Sigmoid colon (tissue), 7 donors: ENCODE measurements at regions of chr5 and their contacts with region 1.

Region 1: GRCh38 chr5:112707187-112708102 is 30.2 kb upstream of the APC start:
- DNase-seq: peak; percentile 99
- H3K4me3 ChIP-seq: peak overlapping the region; percentile 73 to 97 (median 90)
- H3K27ac ChIP-seq: peak overlapping the region; percentile 90 to 97 (median 96)
- H3K4me1 ChIP-seq: peaks cover 0 to 68% (median 49%) of the 10 kb centered on the region in 4 donors
- H3K27me3 ChIP-seq: no peaks in the 10 kb centered on the region
- CTCF ChIP-seq: peak in 1 of 4 experiments; percentile 17
- EP300 ChIP-seq: no peak
- POLR2A ChIP-seq: peak; percentile 56 to 67

Region 2: GRCh38 chr5:112737463-112738190 is 30.2 kb after region 1 on chr5 and contains the start of gene APC:
- intact Hi-C with region 1: loop called (anchors 1 kb)
- DNase-seq: peak; percentile 97
- H3K4me3 ChIP-seq: peak within 1 kb of the TSS; percentile 54 to 67 (median 58)
- H3K27ac ChIP-seq: peak within 1 kb of the TSS; percentile 73 to 85 (median 78)
- H3K4me1 ChIP-seq: peaks cover 0 to 38% (median 13%) of the 10 kb centered on the region in 4 donors
- H3K27me3 ChIP-seq: no peaks in the 10 kb centered on the region
- CTCF ChIP-seq: peak in 2 of 4 experiments; percentile 18 to 33
- EP300 ChIP-seq: no peak
- POLR2A ChIP-seq: peak in 1 of 2 donors; percentile 21
- total RNA-seq, gene APC: 46.1 to 81.4 (median 64.0) TPM

Region 3: DNA sequence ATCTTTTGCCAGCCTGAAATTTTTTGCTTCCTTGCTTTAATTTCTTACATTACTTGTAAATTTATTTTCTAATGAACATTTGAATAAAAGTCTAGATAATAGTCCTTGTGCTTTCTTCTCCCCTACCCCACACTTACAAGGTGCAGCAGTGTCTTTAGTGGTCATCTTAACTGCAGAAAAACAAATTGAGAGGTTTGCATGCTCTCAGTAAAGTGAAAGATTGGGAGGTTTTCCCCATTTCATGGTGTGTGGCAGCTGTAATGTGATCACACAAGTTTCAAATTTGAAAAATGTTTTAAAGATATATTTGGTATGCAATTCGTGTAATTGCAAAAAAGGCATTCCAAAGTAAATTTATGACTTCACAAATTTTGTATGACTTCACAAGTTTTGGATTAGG is 44.9 kb after region 1 on chr5:
- intact Hi-C with region 1: no loop called
- DNase-seq: no peak
- H3K4me3 ChIP-seq: no peak overlapping the region
- H3K27ac ChIP-seq: no peak overlapping the region
- H3K4me1 ChIP-seq: peaks cover 0 to 26% (median 5%) of the 10 kb centered on the region in 4 donors
- H3K27me3 ChIP-seq: no peaks in the 10 kb centered on the region
- CTCF ChIP-seq: no peak
- EP300 ChIP-seq: no peak
- POLR2A ChIP-seq: no peak

Region 4: GRCh38 chr5:112784726-112785125 is 77.3 kb after region 1 on chr5:
- intact Hi-C with region 1: no loop called
- DNase-seq: no peak
- H3K4me3 ChIP-seq: no peak overlapping the region
- H3K27ac ChIP-seq: no peak overlapping the region
- H3K4me1 ChIP-seq: peaks cover 0 to 4% (median 0%) of the 10 kb centered on the region in 4 donors
- H3K27me3 ChIP-seq: no peaks in the 10 kb centered on the region
- CTCF ChIP-seq: no peak
- EP300 ChIP-seq: no peak
- POLR2A ChIP-seq: no peak

Region 5: DNA sequence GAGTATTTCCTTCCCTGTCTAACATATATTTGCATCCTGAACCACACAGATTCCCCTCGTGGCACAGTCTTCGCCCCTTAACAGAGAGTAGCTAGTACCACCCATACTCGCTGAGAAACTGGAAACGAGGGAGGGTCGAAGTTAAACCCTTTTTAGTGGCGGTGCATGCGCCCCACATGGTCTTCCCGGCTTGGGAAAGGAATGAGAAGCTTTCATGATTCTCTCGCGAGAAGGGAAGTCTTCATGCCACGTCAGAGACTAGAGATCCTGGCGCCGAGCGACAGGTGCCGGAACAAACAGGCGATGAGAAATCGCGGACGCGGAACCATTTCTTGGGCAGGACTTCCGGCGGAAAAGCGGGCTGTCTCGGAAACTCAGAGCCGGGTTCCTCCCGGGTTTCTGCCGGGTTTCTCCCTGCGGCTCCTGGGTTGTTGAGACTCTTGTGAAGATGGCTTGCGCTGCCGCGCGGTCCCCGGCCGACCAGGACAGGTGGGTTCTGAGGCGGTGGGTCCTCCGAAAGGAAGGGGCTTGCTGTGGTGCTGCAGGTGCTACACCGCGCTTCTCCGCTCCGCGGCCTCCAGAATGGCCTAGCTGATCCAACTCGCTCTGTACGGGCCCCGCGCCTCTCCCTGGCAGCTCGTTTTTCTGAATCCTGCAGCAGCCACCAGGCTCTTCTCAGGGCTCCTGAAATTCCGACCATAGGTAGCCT is 153.6 kb after region 1 on chr5 and contains the start of gene SRP19:
- intact Hi-C with region 1: loop called (anchors 10 kb)
- DNase-seq: peak; percentile 98
- H3K4me3 ChIP-seq: peak within 1 kb of the TSS; percentile 77 to 92 (median 87)
- H3K27ac ChIP-seq: peak within 1 kb of the TSS; percentile 79 to 92 (median 86)
- H3K4me1 ChIP-seq: peaks cover 0 to 33% (median 29%) of the 10 kb centered on the region in 4 donors
- H3K27me3 ChIP-seq: no peaks in the 10 kb centered on the region
- CTCF ChIP-seq: no peak
- EP300 ChIP-seq: no peak
- POLR2A ChIP-seq: peak; percentile 72 to 79
- total RNA-seq, gene SRP19: 37.1 to 58.2 (median 55.8) TPM